ENCODE measurements at regions of chr11 and their contacts with region 1.

Region 1: GRCh38 chr11:45252134-45252855 is 33.8 kb downstream of the SYT13 start:
- DNase-seq: peak; percentile 91
- ATAC-seq: peak; percentile 99
- H3K4me3 Mint-ChIP-seq: no peak overlapping the region
- H3K27ac Mint-ChIP-seq: no peak overlapping the region
- H3K4me1 Mint-ChIP-seq: 0 out of 2 replicates have a peak, but pooled peaks cover 3% of the 10 kb centered on the region
- H3K27me3 Mint-ChIP-seq: no peaks in the 10 kb centered on the region; the same call in 1 of the 2 replicates
- CTCF ChIP-seq: peak; percentile 93

Region 2: GRCh38 chr11:44977476-44977984 is 274.8 kb before region 1 on chr11:
- CTCF ChIA-PET with region 1: no interaction called
- POLR2A ChIA-PET with region 1: no interaction called
- DNase-seq: no peak
- ATAC-seq: peak; percentile 74
- H3K4me3 Mint-ChIP-seq: no peak overlapping the region
- H3K27ac Mint-ChIP-seq: peak overlapping the region; percentile 32; the same call in 1 of the 2 replicates
- H3K4me1 Mint-ChIP-seq: peaks cover 18% of the 10 kb centered on the region
- H3K27me3 Mint-ChIP-seq: no peaks in the 10 kb centered on the region
- CTCF ChIP-seq: no peak

Region 3: GRCh38 chr11:45204761-45205160 is 47.5 kb before region 1 on chr11:
- CTCF ChIA-PET with region 1: interaction called, 13 read pairs
- POLR2A ChIA-PET with region 1: no interaction called
- DNase-seq: peak; percentile 60
- ATAC-seq: peak; percentile 88
- H3K4me3 Mint-ChIP-seq: no peak overlapping the region
- H3K27ac Mint-ChIP-seq: no peak overlapping the region
- H3K4me1 Mint-ChIP-seq: peaks cover 12% of the 10 kb centered on the region
- H3K27me3 Mint-ChIP-seq: no peaks in the 10 kb centered on the region
- CTCF ChIP-seq: no peak

Region 4: DNA sequence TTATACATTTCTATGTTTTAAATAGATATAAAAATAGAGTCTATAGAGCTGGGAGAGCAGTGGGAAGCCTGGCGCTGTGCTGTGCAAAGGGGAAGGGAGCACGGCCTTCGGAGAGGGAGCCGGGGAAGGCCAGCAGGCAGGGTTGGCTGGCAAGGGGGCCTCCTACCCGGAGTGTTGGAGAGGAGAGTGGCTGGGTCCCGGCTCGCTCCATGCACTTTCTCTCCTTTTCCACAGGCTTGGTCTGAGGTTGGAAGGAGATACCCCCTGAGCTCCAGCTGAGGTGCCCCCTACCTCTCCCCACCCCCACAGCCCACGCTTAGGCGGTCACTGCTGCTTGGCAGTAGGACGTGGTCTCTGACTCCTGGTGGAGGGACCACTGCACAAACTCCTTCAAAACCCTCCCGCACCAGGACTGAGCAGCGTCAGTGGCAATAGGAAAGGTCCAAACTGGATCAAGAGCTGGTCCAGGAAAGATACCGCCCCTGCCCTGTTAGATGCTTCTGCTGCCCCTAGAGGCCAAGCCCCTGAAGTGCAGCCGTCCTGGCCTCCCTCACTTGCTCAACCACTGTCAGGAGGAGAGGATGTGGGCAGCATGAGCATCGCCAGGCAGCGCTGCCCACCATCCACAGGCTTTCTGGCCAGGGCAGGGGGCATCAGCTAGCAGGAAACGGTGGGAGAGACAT is 19.0 kb before region 1 on chr11:
- CTCF ChIA-PET with region 1: interaction called, 34 read pairs
- POLR2A ChIA-PET with region 1: no interaction called
- DNase-seq: peak; percentile 93
- ATAC-seq: peak; percentile 94
- H3K4me3 Mint-ChIP-seq: no peak overlapping the region
- H3K27ac Mint-ChIP-seq: no peak overlapping the region
- H3K4me1 Mint-ChIP-seq: peaks cover 4% of the 10 kb centered on the region
- H3K27me3 Mint-ChIP-seq: peaks cover 12% of the 10 kb centered on the region
- CTCF ChIP-seq: peak; percentile 92

Region 5: GRCh38 chr11:45267052-45267451 is 14.8 kb after region 1 on chr11:
- CTCF ChIA-PET with region 1: interaction called, 28 read pairs
- POLR2A ChIA-PET with region 1: no interaction called
- DNase-seq: peak; percentile 86
- ATAC-seq: peak; percentile 92
- H3K4me3 Mint-ChIP-seq: no peak overlapping the region
- H3K27ac Mint-ChIP-seq: no peak overlapping the region
- H3K4me1 Mint-ChIP-seq: no peaks in the 10 kb centered on the region
- H3K27me3 Mint-ChIP-seq: peaks cover 19% of the 10 kb centered on the region
- CTCF ChIP-seq: peak; percentile 87

Region 6: GRCh38 chr11:45294499-45294898 is 42.2 kb after region 1 on chr11:
- CTCF ChIA-PET with region 1: interaction called, 25 read pairs
- POLR2A ChIA-PET with region 1: no interaction called
- DNase-seq: no peak
- ATAC-seq: no peak
- H3K4me3 Mint-ChIP-seq: no peak overlapping the region
- H3K27ac Mint-ChIP-seq: no peak overlapping the region
- H3K4me1 Mint-ChIP-seq: peaks cover 12% of the 10 kb centered on the region
- H3K27me3 Mint-ChIP-seq: peaks cover 87% of the 10 kb centered on the region
- CTCF ChIP-seq: no peak

Region 7: DNA sequence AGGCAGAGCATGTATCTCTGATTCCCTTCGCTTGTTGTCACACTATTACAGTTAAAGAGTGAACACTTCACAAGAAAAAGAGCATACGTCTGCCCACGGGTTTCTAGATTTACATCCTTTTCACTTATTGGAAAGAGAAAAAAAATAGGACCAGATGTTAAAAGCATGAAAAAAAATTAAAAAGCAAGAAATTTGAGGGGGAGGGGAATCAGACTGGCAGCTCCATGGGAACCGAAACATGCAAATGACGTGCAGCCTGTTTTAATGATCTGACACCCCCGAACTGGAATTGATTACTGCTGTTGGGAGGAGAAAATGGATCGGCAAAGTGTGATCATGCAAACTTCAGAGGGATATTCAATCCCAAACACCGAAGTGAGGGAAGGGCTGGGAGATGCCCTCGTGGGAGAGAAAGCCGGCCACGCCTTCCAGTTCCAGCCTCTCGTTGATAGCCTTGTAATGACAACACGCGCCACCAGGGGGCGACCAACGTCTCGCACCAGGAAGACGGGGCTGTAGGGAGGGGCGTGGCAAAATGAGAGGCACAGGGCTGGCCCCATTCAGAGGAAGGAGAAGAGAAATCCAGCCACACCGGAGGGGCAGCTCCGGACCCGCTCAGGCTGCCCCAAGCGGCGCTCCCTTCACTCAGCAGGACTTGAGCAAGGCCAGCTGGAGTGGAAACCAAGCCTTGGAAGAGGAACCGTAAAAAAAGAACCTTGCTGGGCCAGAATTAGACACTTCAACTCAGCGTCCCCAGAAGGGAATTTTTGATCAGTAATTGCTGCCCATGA is 87.6 kb after region 1 on chr11:
- CTCF ChIA-PET with region 1: interaction called, 13 read pairs
- POLR2A ChIA-PET with region 1: no interaction called
- DNase-seq: peak; percentile 98
- ATAC-seq: peak; percentile 99
- H3K4me3 Mint-ChIP-seq: peak overlapping the region; percentile 58
- H3K27ac Mint-ChIP-seq: peak overlapping the region; percentile 26; the same call in 1 of the 2 replicates
- H3K4me1 Mint-ChIP-seq: peaks cover 40% of the 10 kb centered on the region
- H3K27me3 Mint-ChIP-seq: no peaks in the 10 kb centered on the region; the same call in 1 of the 2 replicates
- CTCF ChIP-seq: peak; percentile 95

Measured in WTC11 (cell line).